ENCODE measurements at regions of chr3 and their contacts with region 1.

Region 1: GRCh38 chr3:57169872-57170623 is 4.9 kb upstream of the IL17RD start:
- DNase-seq: peak; percentile 52
- ATAC-seq: peak; percentile 85
- H3K4me3 ChIP-seq: peak overlapping the region; percentile 43
- H3K27ac ChIP-seq: no peak overlapping the region
- H3K4me1 ChIP-seq: peaks cover 3% of the 10 kb centered on the region; the same call in 1 of the 2 replicates
- H3K27me3 ChIP-seq: peaks cover 20% of the 10 kb centered on the region
- CTCF ChIP-seq: peak; percentile 77
- POLR2A ChIP-seq: no peak
- RAD21 ChIP-seq: peak; percentile 76

Region 2: DNA sequence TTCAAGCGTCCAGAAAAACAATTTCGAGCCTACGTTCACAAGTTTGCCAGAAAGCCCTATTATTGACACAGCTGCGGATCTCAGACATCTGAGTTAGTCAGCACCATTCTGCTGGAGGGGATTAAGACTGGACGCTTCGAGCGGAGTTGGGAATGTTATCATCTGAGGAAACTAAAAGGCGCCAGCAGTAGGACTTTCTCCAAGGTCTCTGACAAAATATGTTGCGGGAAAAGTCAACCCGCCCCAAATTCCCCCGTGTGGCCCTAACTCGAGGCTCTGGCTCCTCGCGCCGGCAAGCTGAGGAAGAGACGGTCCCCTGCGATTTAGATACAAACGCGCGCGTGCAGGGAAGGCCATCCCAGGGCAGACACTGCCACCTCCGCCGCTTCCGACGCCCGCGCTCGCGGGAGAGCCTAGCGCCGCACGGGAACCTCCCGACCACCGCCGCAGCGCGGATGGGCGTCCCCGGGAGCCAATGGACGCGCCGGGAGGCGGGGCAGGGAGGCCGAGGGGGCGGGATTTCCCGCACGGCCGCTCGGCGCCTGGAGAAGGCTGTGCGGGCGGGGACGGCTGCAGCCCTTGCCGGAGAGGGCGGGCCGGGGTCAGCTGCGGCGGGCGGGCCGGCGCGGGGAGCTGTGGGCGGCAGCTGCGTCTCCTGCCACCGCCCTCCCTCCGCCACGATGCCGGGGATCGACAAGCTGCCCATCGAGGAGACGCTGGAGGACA is 57.3 kb after region 1 on chr3 and contains the start of gene APPL1:
- CTCF ChIA-PET with region 1: no interaction called
- POLR2A ChIA-PET with region 1: no interaction called
- dilution Hi-C with region 1: no loop called
- in situ Hi-C with region 1: no loop called
- intact Hi-C with region 1: loop called (anchors 5 kb)
- DNase-seq: peak; percentile 85
- ATAC-seq: peak; percentile 99
- H3K4me3 ChIP-seq: peak within 1 kb of the TSS; percentile 86
- H3K27ac ChIP-seq: peak within 1 kb of the TSS; percentile 72
- H3K4me1 ChIP-seq: peaks cover 2% of the 10 kb centered on the region; the same call in 1 of the 2 replicates
- H3K27me3 ChIP-seq: no peaks in the 10 kb centered on the region
- CTCF ChIP-seq: no peak
- POLR2A ChIP-seq: peak; percentile 49; the same call in 1 of the 2 replicates
- RAD21 ChIP-seq: no peak
- total RNA-seq, gene APPL1: 42.2 and 46.2 TPM in 2 replicates

Region 3: GRCh38 chr3:57434041-57434440 is 264.0 kb after region 1 on chr3:
- CTCF ChIA-PET with region 1: no interaction called
- POLR2A ChIA-PET with region 1: no interaction called
- dilution Hi-C with region 1: no loop called
- in situ Hi-C with region 1: no loop called
- intact Hi-C with region 1: loop called (anchors 10 kb)
- DNase-seq: peak; percentile 28
- ATAC-seq: no peak
- H3K4me3 ChIP-seq: no peak overlapping the region
- H3K27ac ChIP-seq: no peak overlapping the region
- H3K4me1 ChIP-seq: no peaks in the 10 kb centered on the region
- H3K27me3 ChIP-seq: no peaks in the 10 kb centered on the region; the same call in 1 of the 2 replicates
- CTCF ChIP-seq: peak; percentile 42; the same call in 1 of the 2 replicates
- POLR2A ChIP-seq: no peak
- RAD21 ChIP-seq: peak; percentile 34; the same call in 1 of the 2 replicates

Region 4: DNA sequence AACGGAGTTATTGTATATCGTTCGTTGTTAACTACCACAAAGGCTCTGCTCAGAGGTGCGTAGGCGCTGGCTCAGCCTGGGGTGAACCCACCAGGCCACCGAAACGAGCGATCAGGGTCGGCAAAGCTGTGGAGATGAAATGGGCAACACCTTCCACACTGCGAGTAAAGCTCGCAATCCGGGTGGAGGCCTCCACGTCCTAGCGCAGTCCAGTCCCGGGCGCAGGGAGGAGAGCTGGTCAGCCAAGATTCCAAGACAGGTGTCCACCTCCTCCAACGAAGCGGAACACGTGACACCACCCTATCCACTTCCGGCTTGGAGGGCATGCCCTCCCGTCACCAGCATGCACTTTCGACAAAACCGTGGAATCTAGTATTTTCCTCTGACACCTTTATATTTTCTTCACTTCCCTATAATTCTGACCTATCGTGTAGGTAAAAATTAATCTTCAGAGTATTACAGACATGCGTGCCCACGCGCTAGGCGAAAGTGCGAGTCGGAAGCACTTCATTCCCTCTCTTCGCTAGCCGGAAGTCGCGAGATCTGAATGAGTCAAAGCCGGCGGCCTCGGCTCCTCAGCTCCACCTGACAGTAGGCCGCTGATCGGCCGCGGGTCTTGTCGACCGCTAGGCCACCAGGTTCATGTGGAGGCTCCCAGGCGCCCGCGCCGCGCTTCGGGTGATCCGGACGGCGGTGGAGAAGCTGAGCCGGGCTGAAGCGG is 385.9 kb after region 1 on chr3 and contains the start of gene PDE12:
- CTCF ChIA-PET with region 1: no interaction called
- POLR2A ChIA-PET with region 1: no interaction called
- dilution Hi-C with region 1: no loop called
- in situ Hi-C with region 1: loop called (anchors 25 kb)
- intact Hi-C with region 1: loop called (anchors 5 kb)
- DNase-seq: peak; percentile 91
- ATAC-seq: peak; percentile 85
- H3K4me3 ChIP-seq: peak within 1 kb of the TSS; percentile 79
- H3K27ac ChIP-seq: peak within 1 kb of the TSS; percentile 73
- H3K4me1 ChIP-seq: peaks cover 1% of the 10 kb centered on the region; the same call in 1 of the 2 replicates
- H3K27me3 ChIP-seq: no peaks in the 10 kb centered on the region
- CTCF ChIP-seq: no peak
- POLR2A ChIP-seq: peak; percentile 95
- RAD21 ChIP-seq: 0 out of 2 replicates have a peak, but pooled peaks have one; percentile 13
- total RNA-seq, gene PDE12: 16.8 and 16.9 TPM in 2 replicates

Region 5: DNA sequence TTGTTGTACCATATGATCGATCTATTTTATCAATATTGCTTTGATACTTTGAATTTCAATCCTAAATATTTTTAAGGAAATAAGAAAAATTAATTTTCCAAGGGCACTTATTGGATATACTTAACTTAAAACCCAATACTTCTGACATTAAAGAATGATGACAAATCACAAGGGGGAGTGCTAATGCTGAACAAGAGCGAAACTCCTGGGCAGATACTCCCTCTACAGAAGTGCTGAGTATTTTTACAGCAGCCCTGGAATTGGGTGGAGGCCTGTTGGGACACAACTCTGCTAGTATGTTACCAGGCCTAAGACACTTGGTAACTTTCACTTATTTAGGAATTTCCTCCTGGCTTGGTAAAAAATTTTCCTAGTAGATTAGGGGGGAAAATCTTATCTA is 476.7 kb after region 1 on chr3:
- CTCF ChIA-PET with region 1: no interaction called
- POLR2A ChIA-PET with region 1: no interaction called
- dilution Hi-C with region 1: no loop called
- in situ Hi-C with region 1: no loop called
- intact Hi-C with region 1: no loop called
- DNase-seq: peak; percentile 27
- ATAC-seq: peak; percentile 51; the same call in 1 of the 2 replicates
- H3K4me3 ChIP-seq: no peak overlapping the region
- H3K27ac ChIP-seq: no peak overlapping the region
- H3K4me1 ChIP-seq: no peaks in the 10 kb centered on the region
- H3K27me3 ChIP-seq: no peaks in the 10 kb centered on the region
- CTCF ChIP-seq: peak; percentile 18; the same call in 1 of the 2 replicates
- POLR2A ChIP-seq: no peak
- RAD21 ChIP-seq: peak; percentile 30; the same call in 1 of the 2 replicates